ENCODE measurements at regions of chr6 and their contacts with region 1.

Region 1: DNA sequence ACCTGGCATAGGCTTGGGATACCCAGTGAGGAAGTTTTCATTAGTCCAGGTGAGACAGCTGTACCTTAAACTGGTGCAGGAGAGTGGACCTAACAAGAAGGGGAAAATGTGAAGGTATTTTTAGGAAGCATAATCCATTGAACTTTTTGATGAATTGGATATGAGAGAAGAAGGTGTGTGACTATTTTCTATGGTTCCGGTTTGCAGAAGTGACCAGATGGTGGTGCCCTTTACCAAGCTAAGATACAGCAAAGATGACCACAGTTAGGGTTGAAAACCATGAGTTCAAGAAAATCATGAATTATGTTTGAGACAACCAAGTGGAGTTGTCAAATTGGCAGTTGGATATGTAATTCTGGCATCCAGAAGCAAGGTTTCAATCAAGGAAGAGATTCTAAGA is 61.9 kb upstream of the NRSN1 start:
- DNase-seq: no peak
- H3K4me3 Mint-ChIP-seq: no peak overlapping the region
- H3K27ac Mint-ChIP-seq: no peak overlapping the region
- H3K4me1 Mint-ChIP-seq: no peaks in the 10 kb centered on the region
- H3K27me3 Mint-ChIP-seq: peaks cover 2% of the 10 kb centered on the region

Region 2: DNA sequence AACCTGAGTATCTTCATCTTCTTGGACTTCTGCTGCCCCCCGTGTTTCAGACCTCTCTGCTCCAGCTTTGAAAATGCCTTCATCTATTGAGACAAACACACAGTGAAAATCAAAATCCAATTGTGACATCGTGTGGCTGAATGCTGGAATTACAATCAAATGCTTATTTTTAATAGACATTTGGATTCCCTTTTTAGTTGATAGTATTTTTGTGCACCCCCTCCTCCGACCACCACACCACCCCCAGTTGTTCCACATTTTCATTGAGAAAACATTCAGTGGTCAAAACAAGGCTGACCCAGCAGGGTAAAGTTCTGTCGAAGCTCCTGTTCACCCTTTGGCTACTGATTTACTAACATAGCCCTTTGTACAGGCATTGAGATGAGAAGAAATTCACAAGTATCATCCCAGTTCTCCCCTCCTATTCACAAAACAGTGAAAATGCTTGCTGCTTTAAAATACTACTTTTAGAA is 141.0 kb after region 1 on chr6:
- CTCF ChIA-PET with region 1: no interaction called
- intact Hi-C with region 1: loop called (anchors 5 kb)
- DNase-seq: peak; percentile 41
- H3K4me3 Mint-ChIP-seq: no peak overlapping the region
- H3K27ac Mint-ChIP-seq: no peak overlapping the region
- H3K4me1 Mint-ChIP-seq: no peaks in the 10 kb centered on the region
- H3K27me3 Mint-ChIP-seq: peaks cover 2% of the 10 kb centered on the region

Measured in activated naive CD4-positive, alpha-beta T cell treated with anti-CD3 and anti-CD28 coated beads for 36 hours (primary cell).